ENCODE measurements at regions of chr2 and their contacts with region 1.

Region 1: DNA sequence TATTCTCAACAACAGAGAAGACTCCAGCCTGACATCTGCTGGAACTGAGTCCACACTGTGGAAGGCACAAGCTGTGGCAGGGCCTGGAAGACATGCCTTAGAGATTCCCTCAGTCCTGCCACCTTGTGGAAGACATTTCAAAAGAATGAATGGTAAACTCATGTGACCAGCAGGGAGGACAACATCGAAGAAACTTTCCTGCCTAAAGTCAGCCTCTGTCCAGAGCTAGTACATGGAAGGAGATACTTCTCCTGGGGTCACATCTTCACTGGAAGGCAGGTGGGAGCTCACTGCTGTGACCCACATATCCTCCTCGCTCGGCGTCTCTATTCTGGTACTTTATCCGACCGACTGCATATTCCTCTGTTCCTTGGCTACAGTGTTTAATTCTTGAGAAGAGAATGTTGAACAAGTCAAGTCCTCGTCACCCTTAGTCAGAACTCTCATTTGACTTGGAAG is 59.5 kb downstream of the PUM2 start:
- DNase-seq: peak; percentile 75
- ATAC-seq: peak; percentile 91
- H3K4me3 ChIP-seq: no peak overlapping the region
- H3K27ac ChIP-seq: peak overlapping the region; percentile 48; the same call in 1 of the 2 replicates
- H3K4me1 ChIP-seq: peaks cover 26 to 43% of the 10 kb centered on the region in 2 experiments
- H3K27me3 ChIP-seq: no peaks in the 10 kb centered on the region
- CTCF ChIP-seq: peak; percentile 75 to 98 (median 90)
- POLR2A ChIP-seq: no peak
- RAD21 ChIP-seq: peak; percentile 74

Region 2: DNA sequence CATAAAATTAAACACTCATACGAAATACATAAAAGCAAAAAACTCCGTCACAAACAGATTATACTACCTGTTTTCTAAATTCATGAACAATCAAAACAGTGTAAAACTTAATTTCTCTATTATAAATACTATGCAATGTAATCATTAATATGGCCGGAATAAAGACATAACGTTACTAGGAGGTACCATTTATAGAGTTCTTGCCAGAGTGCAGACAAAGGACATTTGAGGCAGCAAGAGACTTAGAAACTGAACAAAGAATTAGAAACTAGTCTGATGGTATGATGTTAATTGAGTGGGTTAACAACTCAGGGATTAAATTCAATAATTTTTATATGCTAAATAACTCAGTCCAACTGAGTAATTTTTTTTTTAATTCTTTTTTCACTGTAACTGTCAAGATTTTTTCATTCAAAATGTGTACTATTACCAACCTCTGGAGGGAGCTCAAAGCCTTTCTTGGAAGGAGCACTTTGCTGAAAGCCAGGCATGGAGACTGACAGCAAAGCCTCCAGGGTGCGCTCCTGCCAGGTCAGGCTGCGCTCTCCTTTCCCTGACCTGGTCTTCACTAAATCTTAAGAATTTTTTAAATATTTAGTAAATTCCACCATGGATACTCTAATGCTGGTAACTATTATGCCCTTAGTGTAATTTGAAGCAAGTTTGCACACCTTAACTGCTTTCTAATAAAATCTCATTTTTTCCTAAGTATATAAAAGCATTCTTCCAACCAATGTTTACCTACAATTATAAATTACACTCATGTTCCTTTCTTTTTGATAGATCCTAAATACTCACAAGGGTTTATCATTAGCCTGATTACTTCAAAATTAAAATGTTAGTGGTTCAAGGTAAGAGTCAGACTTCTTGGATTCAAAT is 335.4 kb before region 1 on chr2:
- CTCF ChIA-PET with region 1: interaction called, 4 read pairs
- POLR2A ChIA-PET with region 1: no interaction called
- RAD21 ChIA-PET with region 1: no interaction called
- intact Hi-C with region 1: loop called (anchors 1 kb)
- DNase-seq: peak; percentile 65
- ATAC-seq: peak; percentile 100
- H3K4me3 ChIP-seq: no peak overlapping the region
- H3K27ac ChIP-seq: no peak overlapping the region
- H3K4me1 ChIP-seq: no peaks in the 10 kb centered on the region
- H3K27me3 ChIP-seq: no peaks in the 10 kb centered on the region
- CTCF ChIP-seq: peak; percentile 77 to 99 (median 82)
- POLR2A ChIP-seq: no peak
- RAD21 ChIP-seq: peak; percentile 97

Region 3: GRCh38 chr2:20103514-20104112 is 187.5 kb before region 1 on chr2:
- CTCF ChIA-PET with region 1: interaction called, 10 read pairs
- POLR2A ChIA-PET with region 1: interaction called, 3 read pairs
- RAD21 ChIA-PET with region 1: interaction called in 1 of 2 experiments, 3 read pairs
- intact Hi-C with region 1: loop called (anchors 1 kb)
- DNase-seq: no peak
- ATAC-seq: peak; percentile 47; the same call in 1 of the 2 replicates
- H3K4me3 ChIP-seq: no peak overlapping the region
- H3K27ac ChIP-seq: no peak overlapping the region
- H3K4me1 ChIP-seq: no peaks in the 10 kb centered on the region
- H3K27me3 ChIP-seq: no peaks in the 10 kb centered on the region
- CTCF ChIP-seq: peak; percentile 22 to 46 (median 45); a peak in 4 of 6 replicates
- POLR2A ChIP-seq: no peak
- RAD21 ChIP-seq: peak; percentile 64

Region 4: GRCh38 chr2:20207051-20207450 is 84.1 kb before region 1 on chr2:
- CTCF ChIA-PET with region 1: no interaction called
- POLR2A ChIA-PET with region 1: no interaction called
- RAD21 ChIA-PET with region 1: no interaction called
- intact Hi-C with region 1: no loop called
- DNase-seq: no peak
- ATAC-seq: no peak
- H3K4me3 ChIP-seq: no peak overlapping the region
- H3K27ac ChIP-seq: no peak overlapping the region
- H3K4me1 ChIP-seq: no peaks in the 10 kb centered on the region
- H3K27me3 ChIP-seq: no peaks in the 10 kb centered on the region
- CTCF ChIP-seq: no peak
- POLR2A ChIP-seq: no peak
- RAD21 ChIP-seq: no peak

Region 5: DNA sequence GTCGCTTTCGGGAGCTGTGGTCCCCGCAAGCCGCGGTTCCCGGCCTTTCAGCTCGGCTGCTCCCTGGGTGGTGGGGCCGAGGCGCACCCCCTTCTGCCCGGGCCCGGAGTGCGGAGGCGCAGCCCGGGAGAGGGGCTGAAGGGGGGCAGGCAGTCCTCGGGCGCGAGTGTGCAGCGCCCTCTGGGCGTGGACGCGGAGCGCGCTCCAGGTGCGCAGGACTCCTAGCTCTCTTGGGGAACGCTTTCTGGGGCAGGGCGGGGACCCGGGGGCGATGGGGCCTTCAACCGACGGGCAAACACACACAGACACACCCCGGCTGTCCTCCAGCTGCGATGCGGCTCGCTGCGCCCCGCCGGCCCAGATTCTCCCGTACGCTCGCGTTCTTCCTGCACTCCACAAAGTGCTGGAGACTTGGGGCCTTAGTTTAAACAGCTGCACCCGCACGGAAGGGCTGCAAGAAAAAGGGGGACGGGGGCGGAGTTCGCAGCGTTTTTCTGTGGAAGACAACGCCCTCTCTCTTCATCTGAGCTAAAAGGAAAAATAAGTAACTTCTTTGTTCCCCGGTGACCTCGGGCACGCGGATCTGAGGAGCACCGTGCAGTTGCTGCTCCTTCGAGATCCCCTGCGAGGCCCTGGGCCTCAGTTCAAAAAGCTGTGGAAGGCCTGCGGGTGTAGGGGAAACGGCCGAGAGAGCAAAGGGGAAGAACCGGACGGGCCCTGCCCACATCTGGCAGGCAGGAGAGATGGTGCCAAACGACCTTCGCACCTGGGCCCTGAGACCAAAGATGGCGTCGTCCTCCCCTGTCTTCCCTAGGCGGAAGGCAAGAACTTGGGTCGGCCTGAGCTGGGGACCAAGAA is 65.6 kb before region 1 on chr2:
- CTCF ChIA-PET with region 1: interaction called, 26 read pairs
- POLR2A ChIA-PET with region 1: no interaction called
- RAD21 ChIA-PET with region 1: no interaction called
- intact Hi-C with region 1: loop called (anchors 5 kb)
- DNase-seq: peak; percentile 42
- ATAC-seq: peak; percentile 76
- H3K4me3 ChIP-seq: peak overlapping the region; percentile 67 to 69
- H3K27ac ChIP-seq: peak overlapping the region; percentile 59
- H3K4me1 ChIP-seq: peaks cover 21 to 53% of the 10 kb centered on the region in 2 experiments
- H3K27me3 ChIP-seq: no peaks in the 10 kb centered on the region
- CTCF ChIP-seq: peak in 2 of 3 experiments; percentile 55; a peak in 4 of 6 replicates
- POLR2A ChIP-seq: no peak
- RAD21 ChIP-seq: no peak

Region 6: GRCh38 chr2:20249170-20249569 is 42.0 kb before region 1 on chr2:
- CTCF ChIA-PET with region 1: no interaction called
- POLR2A ChIA-PET with region 1: no interaction called
- RAD21 ChIA-PET with region 1: no interaction called
- intact Hi-C with region 1: no loop called
- DNase-seq: no peak
- ATAC-seq: no peak
- H3K4me3 ChIP-seq: no peak overlapping the region
- H3K27ac ChIP-seq: no peak overlapping the region
- H3K4me1 ChIP-seq: no peaks in the 10 kb centered on the region
- H3K27me3 ChIP-seq: no peaks in the 10 kb centered on the region
- CTCF ChIP-seq: no peak
- POLR2A ChIP-seq: no peak
- RAD21 ChIP-seq: no peak

Region 7: GRCh38 chr2:20326163-20326780 is 35.1 kb after region 1 on chr2:
- CTCF ChIA-PET with region 1: interaction called, 25 read pairs
- POLR2A ChIA-PET with region 1: no interaction called
- RAD21 ChIA-PET with region 1: no interaction called
- intact Hi-C with region 1: no loop called
- DNase-seq: peak; percentile 24
- ATAC-seq: peak; percentile 98
- H3K4me3 ChIP-seq: no peak overlapping the region
- H3K27ac ChIP-seq: no peak overlapping the region
- H3K4me1 ChIP-seq: no peaks in the 10 kb centered on the region
- H3K27me3 ChIP-seq: no peaks in the 10 kb centered on the region
- CTCF ChIP-seq: peak; percentile 69 to 88 (median 85)
- POLR2A ChIP-seq: no peak
- RAD21 ChIP-seq: peak; percentile 68